ENCODE measurements at regions of chr2 and their contacts with region 1.

Region 1: DNA sequence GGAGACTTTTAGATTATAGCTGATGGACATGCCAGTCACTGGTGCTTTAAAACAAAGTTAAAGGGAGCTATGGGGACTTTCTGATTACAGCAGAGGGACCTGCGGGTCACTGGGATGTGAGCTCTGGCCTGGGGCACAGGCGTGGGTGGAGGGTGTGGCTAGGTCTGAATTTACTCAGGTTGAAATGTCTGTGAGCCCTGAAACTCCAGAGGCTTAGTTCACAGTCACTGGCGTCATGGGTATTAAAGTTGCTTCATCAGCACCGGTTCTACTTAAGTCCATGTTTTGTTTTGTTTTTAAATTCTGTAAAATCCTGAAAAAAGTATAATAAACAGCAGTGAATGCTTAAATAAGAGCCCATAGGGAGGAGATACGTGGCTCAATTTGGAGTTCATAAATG is 49.0 kb upstream of the TMEM18 start:
- DNase-seq: no peak
- H3K4me3 ChIP-seq: no peak overlapping the region
- H3K27me3 ChIP-seq: no peaks in the 10 kb centered on the region
- CTCF ChIP-seq: no peak

Region 2: DNA sequence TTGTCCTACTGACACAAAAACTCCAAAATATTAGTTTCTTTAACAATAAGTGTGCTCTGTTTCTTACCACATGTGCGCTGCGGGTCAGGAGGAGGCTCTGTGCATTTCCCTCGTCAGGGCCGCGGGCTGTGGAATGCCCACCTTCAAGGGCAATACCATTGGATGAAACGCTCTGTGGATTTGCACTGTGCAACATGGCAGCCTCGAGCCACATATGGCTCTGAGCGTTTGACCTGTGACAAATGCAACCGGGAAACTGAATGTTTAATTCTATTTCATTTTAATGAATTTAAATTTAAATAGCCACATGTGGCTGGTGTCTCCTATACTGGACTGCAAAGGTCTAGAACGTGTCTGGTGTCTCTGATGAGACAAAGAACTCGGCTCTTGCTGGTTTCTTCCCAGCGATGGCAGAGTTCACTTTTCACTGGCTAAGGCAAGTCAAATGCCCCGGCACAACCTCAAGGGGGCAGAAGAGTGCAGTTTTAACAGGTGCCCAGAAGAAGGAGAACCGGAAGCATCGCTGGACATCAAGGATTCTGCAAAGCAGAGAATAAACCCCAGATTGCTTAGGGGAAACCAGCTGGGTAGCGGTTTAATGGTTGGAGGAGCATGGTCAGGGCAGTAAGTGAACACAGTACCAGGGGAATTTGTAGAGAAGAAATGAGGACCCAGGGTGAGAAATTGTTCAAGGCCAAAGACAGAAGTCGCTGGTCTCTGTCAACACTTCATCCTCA is 12.0 kb before region 1 on chr2:
- CTCF ChIA-PET with region 1: interaction called, 10 read pairs
- POLR2A ChIA-PET with region 1: no interaction called
- DNase-seq: no peak
- H3K4me3 ChIP-seq: no peak overlapping the region
- H3K27me3 ChIP-seq: peaks cover 2% of the 10 kb centered on the region; the same call in 1 of the 2 replicates
- CTCF ChIP-seq: peak; percentile 83

Region 3: DNA sequence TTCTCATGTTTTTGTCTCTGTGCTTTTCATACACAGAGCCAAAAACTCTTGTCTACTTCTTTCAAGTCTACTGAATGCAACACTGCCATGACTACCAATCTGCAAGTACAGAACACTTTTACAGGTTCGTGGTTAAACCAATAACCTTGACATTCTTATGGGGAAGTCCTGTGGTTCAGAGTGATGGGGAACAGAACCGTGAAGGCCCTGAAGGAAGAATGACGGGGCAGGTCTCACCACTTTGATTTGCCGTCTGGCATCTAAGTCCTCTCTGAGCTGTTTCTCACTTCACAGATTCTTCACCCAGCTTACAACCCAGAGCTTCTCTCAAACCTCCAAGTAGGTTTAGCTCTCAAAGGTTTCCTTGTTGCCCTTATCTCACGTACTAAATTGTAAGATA is 107.0 kb after region 1 on chr2:
- CTCF ChIA-PET with region 1: no interaction called
- POLR2A ChIA-PET with region 1: no interaction called
- DNase-seq: no peak
- H3K4me3 ChIP-seq: no peak overlapping the region
- H3K27me3 ChIP-seq: no peaks in the 10 kb centered on the region
- CTCF ChIP-seq: no peak

Measured in BJ (cell line).